Dorsolateral prefrontal cortex (tissue), 120 donors: ENCODE measurements at regions of chr4 and their contacts with region 1.

Region 1: GRCh38 chr4:149370785-149371420 is 444.7 kb downstream of the IQCM start:
- DNase-seq: peak in 1 of 10 donors; percentile 13
- H3K4me3 ChIP-seq: no peak overlapping the region
- H3K27ac ChIP-seq: no peak overlapping the region
- H3K27me3 ChIP-seq: no peaks in the 10 kb centered on the region
- CTCF ChIP-seq: peak in 50 of 56 donors; percentile 15 to 67 (median 45)

Region 2: GRCh38 chr4:149549911-149550310 is 179.0 kb after region 1 on chr4:
- intact Hi-C with region 1: loop called in 1 of 2 experiments (anchors 2 kb)
- DNase-seq: peak in 1 of 10 donors; percentile 32
- H3K4me3 ChIP-seq: no peak overlapping the region
- H3K27ac ChIP-seq: no peak overlapping the region
- H3K27me3 ChIP-seq: no peaks in the 10 kb centered on the region
- CTCF ChIP-seq: peak in 28 of 56 donors; percentile 9 to 51 (median 30)

Region 3: GRCh38 chr4:149891426-149891825 is 520.5 kb after region 1 on chr4:
- intact Hi-C with region 1: loop called (anchors 5 to 10 kb)
- DNase-seq: no peak
- H3K4me3 ChIP-seq: no peak overlapping the region
- H3K27ac ChIP-seq: no peak overlapping the region
- H3K27me3 ChIP-seq: no peaks in the 10 kb centered on the region
- CTCF ChIP-seq: no peak

Region 4: GRCh38 chr4:149897783-149898182 is 526.9 kb after region 1 on chr4:
- intact Hi-C with region 1: loop called (anchors 5 to 10 kb)
- DNase-seq: no peak
- H3K4me3 ChIP-seq: no peak overlapping the region
- H3K27ac ChIP-seq: no peak overlapping the region
- H3K27me3 ChIP-seq: peaks cover 0 to 2% (median 0%) of the 10 kb centered on the region in 45 donors
- CTCF ChIP-seq: peak in 55 of 56 donors; percentile 19 to 72 (median 45)